IMR-90 (cell line): ENCODE measurements at regions of chr20 and their contacts with region 1.

Region 1: GRCh38 chr20:3262566-3262965 is 23.6 kb upstream of the SLC4A11 start:
- DNase-seq: peak; percentile 69
- ATAC-seq: peak; percentile 81
- H3K4me3 ChIP-seq: no peak overlapping the region
- H3K27ac ChIP-seq: no peak overlapping the region
- H3K4me1 ChIP-seq: peaks cover 6% of the 10 kb centered on the region
- H3K27me3 ChIP-seq: no peaks in the 10 kb centered on the region
- CTCF ChIP-seq: no peak
- POLR2A ChIP-seq: no peak
- RAD21 ChIP-seq: no peak

Region 2: GRCh38 chr20:3156811-3157619 is 105.6 kb before region 1 on chr20:
- CTCF ChIA-PET with region 1: no interaction called
- POLR2A ChIA-PET with region 1: no interaction called
- dilution Hi-C with region 1: no loop called
- in situ Hi-C with region 1: no loop called
- intact Hi-C with region 1: no loop called
- DNase-seq: peak; percentile 26
- ATAC-seq: no peak
- H3K4me3 ChIP-seq: no peak overlapping the region
- H3K27ac ChIP-seq: no peak overlapping the region
- H3K4me1 ChIP-seq: peaks cover 4% of the 10 kb centered on the region
- H3K27me3 ChIP-seq: no peaks in the 10 kb centered on the region
- CTCF ChIP-seq: no peak
- POLR2A ChIP-seq: no peak
- RAD21 ChIP-seq: no peak

Region 3: GRCh38 chr20:3239026-3239866 is 23.3 kb before region 1 on chr20 and contains the start of gene SLC4A11:
- CTCF ChIA-PET with region 1: no interaction called
- POLR2A ChIA-PET with region 1: interaction called, 13 read pairs
- dilution Hi-C with region 1: no loop called
- in situ Hi-C with region 1: no loop called
- intact Hi-C with region 1: no loop called
- DNase-seq: peak; percentile 33
- ATAC-seq: peak; percentile 80
- H3K4me3 ChIP-seq: peak within 1 kb of the TSS; percentile 64
- H3K27ac ChIP-seq: no peak within 1 kb of the TSS
- H3K4me1 ChIP-seq: no peaks in the 10 kb centered on the region; the same call in 1 of the 2 replicates
- H3K27me3 ChIP-seq: peaks cover 36% of the 10 kb centered on the region
- CTCF ChIP-seq: no peak
- POLR2A ChIP-seq: no peak
- RAD21 ChIP-seq: no peak
- total RNA-seq, gene SLC4A11: 0.28 and 0.36 TPM in 2 replicates

Region 4: GRCh38 chr20:3312940-3313682 is 50.5 kb after region 1 on chr20:
- CTCF ChIA-PET with region 1: no interaction called
- POLR2A ChIA-PET with region 1: interaction called, 15 read pairs
- dilution Hi-C with region 1: no loop called
- in situ Hi-C with region 1: no loop called
- intact Hi-C with region 1: no loop called
- DNase-seq: peak; percentile 53
- ATAC-seq: peak; percentile 70
- H3K4me3 ChIP-seq: no peak overlapping the region
- H3K27ac ChIP-seq: peak overlapping the region; percentile 74; the same call in 1 of the 2 replicates
- H3K4me1 ChIP-seq: peaks cover 10% of the 10 kb centered on the region
- H3K27me3 ChIP-seq: no peaks in the 10 kb centered on the region
- CTCF ChIP-seq: no peak
- POLR2A ChIP-seq: no peak
- RAD21 ChIP-seq: no peak